ENCODE measurements at regions of chr7 and their contacts with region 1.

Region 1: GRCh38 chr7:153470004-153470671 is 582.1 kb upstream of the DPP6 start:
- DNase-seq: no peak

Region 2: GRCh38 chr7:153422291-153423209 is 47.6 kb before region 1 on chr7:
- intact Hi-C with region 1: loop called in 1 of 2 experiments (anchors 1 kb)
- DNase-seq: no peak

Region 3: DNA sequence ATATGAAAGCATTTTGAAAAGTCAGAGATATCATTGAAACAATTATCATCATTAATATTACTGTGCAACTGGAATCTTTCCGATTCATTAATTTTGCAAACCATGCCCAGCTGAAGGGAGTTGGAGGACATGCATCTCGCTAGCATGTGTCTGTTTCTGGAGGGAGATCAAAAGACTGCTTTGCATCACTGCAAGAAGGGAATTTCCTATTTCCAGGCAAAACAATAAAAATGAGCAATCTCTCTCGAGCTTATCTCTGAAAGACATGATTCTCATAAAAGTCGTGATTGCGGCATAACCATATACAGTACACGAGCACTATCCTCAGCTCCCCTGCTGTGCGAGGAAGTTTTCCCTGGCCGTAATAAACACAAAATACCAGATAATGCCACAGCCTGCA is 25.5 kb before region 1 on chr7:
- intact Hi-C with region 1: loop called in 1 of 2 experiments (anchors 1 kb)
- DNase-seq: no peak

Measured in posterior vena cava (tissue), 2 donors.